GM12878 (cell line): ENCODE measurements at regions of chr2 and their contacts with region 1.

Region 1: GRCh38 chr2:54522624-54523281 is 66.6 kb downstream of the SPTBN1 start:
- DNase-seq: peak; percentile 47
- ATAC-seq: peak; percentile 94
- H3K4me3 ChIP-seq: no peak overlapping the region
- H3K27ac ChIP-seq: no peak overlapping the region
- H3K4me1 ChIP-seq: peaks cover 15% of the 10 kb centered on the region
- H3K27me3 ChIP-seq: no peaks in the 10 kb centered on the region
- CTCF ChIP-seq: peak; percentile 71 to 84 (median 72)
- EP300 ChIP-seq: no peak
- POLR2A ChIP-seq: no peak
- RAD21 ChIP-seq: peak; percentile 93

Region 2: DNA sequence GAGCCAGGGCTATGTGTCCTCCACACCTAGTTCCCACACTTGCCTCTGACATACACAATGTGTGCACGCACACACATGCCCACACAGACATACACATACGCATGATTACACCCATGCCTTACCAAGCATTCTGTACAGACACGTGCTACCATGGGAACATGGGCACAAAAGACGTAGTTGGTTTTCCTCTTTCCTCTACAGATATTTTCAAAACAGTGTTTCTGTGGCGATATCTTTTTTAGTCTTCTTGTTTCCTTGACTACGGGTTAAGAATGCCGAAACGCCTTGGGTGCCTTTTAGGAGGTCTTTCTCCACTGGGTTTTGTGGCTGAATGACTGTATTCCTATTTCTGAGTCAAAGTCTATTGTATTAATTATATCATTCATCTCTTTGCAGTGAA is 142.1 kb before region 1 on chr2:
- CTCF ChIA-PET with region 1: no interaction called
- POLR2A ChIA-PET with region 1: no interaction called
- RAD21 ChIA-PET with region 1: no interaction called
- SMC1A ChIA-PET with region 1: no interaction called
- in situ Hi-C with region 1: no loop called
- intact Hi-C with region 1: no loop called
- DNase-seq: no peak
- ATAC-seq: no peak
- H3K4me3 ChIP-seq: no peak overlapping the region
- H3K27ac ChIP-seq: no peak overlapping the region
- H3K4me1 ChIP-seq: no peaks in the 10 kb centered on the region
- H3K27me3 ChIP-seq: no peaks in the 10 kb centered on the region; a peak in 1 of 4 replicates
- CTCF ChIP-seq: no peak
- EP300 ChIP-seq: no peak
- POLR2A ChIP-seq: no peak
- RAD21 ChIP-seq: no peak

Region 3: DNA sequence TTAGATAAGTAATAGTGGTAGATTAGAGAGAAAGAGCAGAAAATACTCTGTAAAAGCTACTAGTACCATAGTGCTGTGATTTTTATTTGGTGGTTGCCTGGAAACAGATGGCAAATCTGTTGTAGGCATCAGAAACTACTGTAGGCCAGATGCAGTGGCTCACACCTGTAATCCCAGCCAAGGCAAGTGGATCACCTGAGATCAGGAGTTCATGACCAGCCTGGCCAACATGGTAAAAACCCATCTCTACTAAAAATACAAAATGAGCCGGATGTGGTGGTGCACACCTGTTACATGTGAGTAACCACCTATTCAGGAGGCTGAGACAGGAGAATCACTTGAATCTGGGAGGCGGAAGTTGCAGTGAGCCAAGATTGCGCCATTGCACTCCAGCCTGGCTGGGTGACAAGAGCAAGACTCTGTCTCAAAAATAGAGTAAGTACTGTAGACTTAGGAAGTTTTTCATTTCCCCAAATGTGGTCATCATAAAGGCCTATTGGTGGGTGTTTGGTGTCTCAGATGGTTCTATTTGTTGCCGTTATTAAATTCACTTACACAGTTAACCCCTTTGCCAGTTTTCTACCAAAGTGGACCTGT is 12.9 kb after region 1 on chr2:
- CTCF ChIA-PET with region 1: interaction called, 14 read pairs
- POLR2A ChIA-PET with region 1: interaction called, 3 read pairs
- RAD21 ChIA-PET with region 1: interaction called, 4 read pairs
- SMC1A ChIA-PET with region 1: interaction called, 19 read pairs
- in situ Hi-C with region 1: no loop called
- intact Hi-C with region 1: no loop called
- DNase-seq: no peak
- ATAC-seq: peak; percentile 48
- H3K4me3 ChIP-seq: no peak overlapping the region
- H3K27ac ChIP-seq: no peak overlapping the region
- H3K4me1 ChIP-seq: peaks cover 10% of the 10 kb centered on the region; the same call in 1 of the 2 replicates
- H3K27me3 ChIP-seq: no peaks in the 10 kb centered on the region
- CTCF ChIP-seq: no peak
- EP300 ChIP-seq: no peak
- POLR2A ChIP-seq: no peak
- RAD21 ChIP-seq: no peak

Region 4: GRCh38 chr2:54565547-54565946 is 42.8 kb after region 1 on chr2:
- CTCF ChIA-PET with region 1: interaction called, 18 read pairs
- POLR2A ChIA-PET with region 1: interaction called, 43 read pairs
- RAD21 ChIA-PET with region 1: interaction called, 157 read pairs
- SMC1A ChIA-PET with region 1: interaction called, 63 read pairs
- in situ Hi-C with region 1: no loop called
- intact Hi-C with region 1: loop called (anchors 1 kb)
- DNase-seq: no peak
- ATAC-seq: no peak
- H3K4me3 ChIP-seq: 0 out of 2 replicates have a peak overlapping the region, but pooled peaks have one; percentile 43
- H3K27ac ChIP-seq: peak overlapping the region; percentile 62; the same call in 1 of the 2 replicates
- H3K4me1 ChIP-seq: peaks cover 41% of the 10 kb centered on the region
- H3K27me3 ChIP-seq: no peaks in the 10 kb centered on the region
- CTCF ChIP-seq: no peak
- EP300 ChIP-seq: no peak
- POLR2A ChIP-seq: no peak
- RAD21 ChIP-seq: no peak

Region 5: GRCh38 chr2:54606393-54606969 is 83.7 kb after region 1 on chr2:
- CTCF ChIA-PET with region 1: interaction called, 6 read pairs
- POLR2A ChIA-PET with region 1: no interaction called
- RAD21 ChIA-PET with region 1: interaction called, 15 read pairs
- SMC1A ChIA-PET with region 1: interaction called, 26 read pairs
- in situ Hi-C with region 1: no loop called
- intact Hi-C with region 1: no loop called
- DNase-seq: no peak
- ATAC-seq: no peak
- H3K4me3 ChIP-seq: no peak overlapping the region
- H3K27ac ChIP-seq: no peak overlapping the region
- H3K4me1 ChIP-seq: peaks cover 24% of the 10 kb centered on the region
- H3K27me3 ChIP-seq: no peaks in the 10 kb centered on the region
- CTCF ChIP-seq: no peak
- EP300 ChIP-seq: no peak
- POLR2A ChIP-seq: no peak
- RAD21 ChIP-seq: no peak

Region 6: GRCh38 chr2:54657664-54658083 is 134.9 kb after region 1 on chr2:
- CTCF ChIA-PET with region 1: interaction called, 77 read pairs
- POLR2A ChIA-PET with region 1: interaction called, 4 read pairs
- RAD21 ChIA-PET with region 1: interaction called, 16 read pairs
- SMC1A ChIA-PET with region 1: interaction called, 28 read pairs
- in situ Hi-C with region 1: no loop called
- intact Hi-C with region 1: loop called (anchors 5 kb)
- DNase-seq: no peak
- ATAC-seq: peak; percentile 88
- H3K4me3 ChIP-seq: no peak overlapping the region
- H3K27ac ChIP-seq: no peak overlapping the region
- H3K4me1 ChIP-seq: no peaks in the 10 kb centered on the region
- H3K27me3 ChIP-seq: no peaks in the 10 kb centered on the region
- CTCF ChIP-seq: peak; percentile 50 to 63 (median 60); a peak in 5 of 6 replicates
- EP300 ChIP-seq: no peak
- POLR2A ChIP-seq: peak; percentile 56; the same call in 1 of the 2 replicates
- RAD21 ChIP-seq: peak; percentile 51; the same call in 1 of the 2 replicates

Region 7: GRCh38 chr2:54691445-54692135 is 168.8 kb after region 1 on chr2:
- CTCF ChIA-PET with region 1: interaction called, 10 read pairs
- POLR2A ChIA-PET with region 1: no interaction called
- RAD21 ChIA-PET with region 1: interaction called, 5 read pairs
- SMC1A ChIA-PET with region 1: interaction called, 10 read pairs
- in situ Hi-C with region 1: no loop called
- intact Hi-C with region 1: no loop called
- DNase-seq: no peak
- ATAC-seq: no peak
- H3K4me3 ChIP-seq: no peak overlapping the region
- H3K27ac ChIP-seq: no peak overlapping the region
- H3K4me1 ChIP-seq: no peaks in the 10 kb centered on the region; the same call in 1 of the 2 replicates
- H3K27me3 ChIP-seq: no peaks in the 10 kb centered on the region
- CTCF ChIP-seq: no peak
- EP300 ChIP-seq: no peak
- POLR2A ChIP-seq: no peak
- RAD21 ChIP-seq: no peak